CD4-positive, alpha-beta T cell (primary cell): ENCODE measurements at regions of chr1 and their contacts with region 1.

Region 1: GRCh38 chr1:221741711-221742554 is at the start of gene DUSP10:
- DNase-seq: peak; percentile 97 to 100 (median 98)
- ATAC-seq: peak; percentile 85
- H3K4me3 ChIP-seq: peak within 1 kb of the TSS; percentile 75
- H3K4me3 Mint-ChIP-seq: peak within 1 kb of the TSS; percentile 75
- H3K27ac ChIP-seq: peak within 1 kb of the TSS; percentile 98 to 99
- H3K27ac Mint-ChIP-seq: no peak within 1 kb of the TSS
- H3K4me1 ChIP-seq: peaks cover 41% of the 10 kb centered on the region
- H3K4me1 Mint-ChIP-seq: peaks cover 26% of the 10 kb centered on the region
- H3K27me3 ChIP-seq: no peaks in the 10 kb centered on the region
- H3K27me3 Mint-ChIP-seq: no peaks in the 10 kb centered on the region
- CTCF ChIP-seq: no peak
- total RNA-seq, gene DUSP10: 66.9 to 70.9 TPM

Region 2: DNA sequence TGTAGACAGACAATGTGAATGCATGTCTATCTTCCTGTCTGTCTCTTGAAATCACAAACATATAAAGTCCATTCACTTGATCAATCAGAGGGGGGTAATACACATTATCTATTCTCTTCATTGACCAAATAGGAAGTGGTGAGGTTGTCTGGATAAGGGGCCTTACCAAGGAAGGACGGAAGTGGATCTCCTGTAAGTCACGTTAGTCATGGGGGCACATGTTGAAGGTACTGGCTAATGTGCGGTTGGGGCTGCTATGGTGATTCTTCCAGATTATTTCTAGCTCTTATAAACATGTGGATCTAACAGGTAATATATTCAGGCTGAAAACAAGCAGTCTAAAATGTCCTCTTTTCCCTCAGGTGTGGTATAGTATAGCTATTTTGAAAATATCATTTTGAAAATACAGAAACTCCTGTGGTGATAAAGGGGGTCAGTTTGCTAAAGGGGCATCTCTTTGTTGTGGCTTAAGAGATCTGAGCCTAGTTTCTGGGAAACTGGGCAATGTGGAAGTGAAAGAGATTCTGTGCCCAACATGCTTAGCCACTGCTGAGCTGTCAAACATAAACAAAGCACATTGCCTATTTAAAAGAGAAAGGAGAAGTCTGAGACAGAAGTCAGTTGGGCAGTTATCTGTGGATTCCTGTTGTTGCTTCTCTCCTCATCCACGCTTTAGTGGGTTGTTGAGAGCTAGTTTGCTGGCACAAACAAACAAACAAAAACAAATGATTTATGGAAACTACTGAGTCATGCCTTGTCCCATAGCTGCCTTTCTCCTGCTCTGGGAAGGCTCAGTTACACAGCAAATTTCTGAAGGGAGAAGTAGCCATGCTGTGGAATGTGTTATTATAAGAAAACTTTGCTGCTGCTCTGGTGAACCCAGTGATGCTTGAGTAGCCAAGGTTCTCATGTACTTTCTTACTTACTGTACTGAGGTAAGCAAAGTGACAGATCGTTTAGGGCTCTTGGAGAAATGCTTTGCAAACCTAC is 695.8 kb before region 1 on chr1:
- CTCF ChIA-PET with region 1: no interaction called
- POLR2A ChIA-PET with region 1: no interaction called
- intact Hi-C with region 1: no loop called
- DNase-seq: peak in 3 of 14 experiments; percentile 18 to 31 (median 27)
- ATAC-seq: no peak
- H3K4me3 ChIP-seq: no peak overlapping the region
- H3K4me3 Mint-ChIP-seq: no peak overlapping the region
- H3K27ac ChIP-seq: no peak overlapping the region
- H3K27ac Mint-ChIP-seq: no peak overlapping the region
- H3K4me1 ChIP-seq: no peaks in the 10 kb centered on the region
- H3K4me1 Mint-ChIP-seq: no peaks in the 10 kb centered on the region
- H3K27me3 ChIP-seq: peaks cover 0 to 8% of the 10 kb centered on the region in 2 experiments
- H3K27me3 Mint-ChIP-seq: peaks cover 9% of the 10 kb centered on the region
- CTCF ChIP-seq: no peak

Region 3: DNA sequence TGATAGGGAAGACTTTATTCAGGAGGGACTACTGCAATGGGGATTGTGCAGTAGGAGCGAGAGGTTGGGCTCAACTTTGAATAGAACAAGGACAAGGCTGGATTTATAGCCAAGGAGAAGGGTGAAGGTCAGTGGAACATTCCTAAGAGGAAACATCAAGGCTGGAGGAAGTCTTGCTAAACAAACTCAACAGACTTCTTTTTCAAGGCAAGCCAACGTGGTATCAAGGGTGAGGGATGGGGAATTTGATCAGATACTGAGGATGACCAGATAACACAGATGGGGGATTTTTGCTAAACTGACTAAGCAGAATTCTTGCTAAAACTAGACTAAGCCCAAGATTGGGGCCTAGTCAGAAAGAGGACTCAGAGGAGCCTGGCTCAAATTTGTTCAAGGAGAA is 107.3 kb before region 1 on chr1:
- CTCF ChIA-PET with region 1: interaction called, 3 read pairs
- POLR2A ChIA-PET with region 1: interaction called, 8 read pairs
- intact Hi-C with region 1: loop called in 1 of 2 experiments (anchors 5 kb)
- DNase-seq: no peak
- ATAC-seq: no peak
- H3K4me3 ChIP-seq: no peak overlapping the region
- H3K4me3 Mint-ChIP-seq: no peak overlapping the region
- H3K27ac ChIP-seq: no peak overlapping the region
- H3K27ac Mint-ChIP-seq: no peak overlapping the region
- H3K4me1 ChIP-seq: no peaks in the 10 kb centered on the region
- H3K4me1 Mint-ChIP-seq: no peaks in the 10 kb centered on the region
- H3K27me3 ChIP-seq: no peaks in the 10 kb centered on the region
- H3K27me3 Mint-ChIP-seq: no peaks in the 10 kb centered on the region
- CTCF ChIP-seq: no peak

Region 4: GRCh38 chr1:221693087-221693486 is 48.8 kb before region 1 on chr1:
- CTCF ChIA-PET with region 1: interaction called, 5 read pairs
- POLR2A ChIA-PET with region 1: interaction called, 13 read pairs
- intact Hi-C with region 1: loop called in 1 of 2 experiments (anchors 5 kb)
- DNase-seq: no peak
- ATAC-seq: peak; percentile 48
- H3K4me3 ChIP-seq: no peak overlapping the region
- H3K4me3 Mint-ChIP-seq: no peak overlapping the region
- H3K27ac ChIP-seq: no peak overlapping the region
- H3K27ac Mint-ChIP-seq: no peak overlapping the region
- H3K4me1 ChIP-seq: peaks cover 3% of the 10 kb centered on the region
- H3K4me1 Mint-ChIP-seq: peaks cover 3% of the 10 kb centered on the region
- H3K27me3 ChIP-seq: no peaks in the 10 kb centered on the region
- H3K27me3 Mint-ChIP-seq: no peaks in the 10 kb centered on the region
- CTCF ChIP-seq: no peak

Region 5: DNA sequence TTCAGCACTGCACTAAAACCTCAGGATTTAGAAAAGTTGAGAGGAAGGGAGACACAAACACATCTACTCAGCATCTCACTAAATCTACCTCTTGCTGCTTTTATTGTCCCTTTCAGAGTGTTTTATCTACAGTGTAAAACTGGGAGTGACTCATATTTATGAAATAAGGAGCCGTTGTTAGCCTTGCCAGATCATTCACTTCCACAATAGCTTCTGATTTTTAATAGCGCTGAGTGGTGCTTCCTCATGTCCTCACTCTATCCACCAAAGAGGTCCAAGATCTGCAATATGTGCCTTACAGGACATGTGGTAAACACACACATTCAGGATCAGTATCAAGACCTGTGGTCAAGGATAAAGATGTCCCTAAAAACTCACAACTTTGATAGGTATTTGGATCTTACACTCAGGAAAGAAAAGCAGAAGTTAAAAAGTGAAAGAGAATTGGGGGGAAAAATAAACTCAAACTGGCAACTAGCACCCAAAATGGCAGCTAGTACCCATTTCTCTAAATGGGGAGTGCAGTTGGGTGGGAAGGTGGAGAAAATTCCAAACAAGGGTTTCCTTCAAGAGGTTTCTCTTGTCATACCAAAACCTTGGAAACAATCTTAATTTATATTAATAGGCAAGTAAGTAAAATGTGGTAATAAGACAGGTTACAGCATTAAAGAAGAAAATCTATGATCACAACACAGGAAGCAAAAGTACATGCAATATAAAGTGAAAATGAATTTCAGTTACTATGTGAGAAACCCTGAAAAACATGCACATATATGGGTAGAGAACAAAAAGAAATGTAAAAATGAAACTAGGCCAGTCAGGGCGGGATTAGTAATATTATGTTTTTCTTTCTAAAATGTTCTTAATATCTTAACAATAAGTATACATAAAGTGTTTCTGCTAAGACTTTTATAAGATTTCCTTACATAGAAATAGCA is 15.9 kb before region 1 on chr1:
- CTCF ChIA-PET with region 1: interaction called, 6 read pairs
- POLR2A ChIA-PET with region 1: interaction called, 103 read pairs
- intact Hi-C with region 1: loop called in 1 of 2 experiments (anchors 2 kb)
- DNase-seq: peak in 2 of 14 experiments; percentile 37 to 70
- ATAC-seq: peak; percentile 85
- H3K4me3 ChIP-seq: peak overlapping the region; percentile 6
- H3K4me3 Mint-ChIP-seq: peak overlapping the region; percentile 43
- H3K27ac ChIP-seq: no peak overlapping the region
- H3K27ac Mint-ChIP-seq: peak overlapping the region; percentile 13
- H3K4me1 ChIP-seq: peaks cover 20% of the 10 kb centered on the region
- H3K4me1 Mint-ChIP-seq: peaks cover 71% of the 10 kb centered on the region
- H3K27me3 ChIP-seq: no peaks in the 10 kb centered on the region
- H3K27me3 Mint-ChIP-seq: no peaks in the 10 kb centered on the region
- CTCF ChIP-seq: no peak

Region 6: GRCh38 chr1:221783936-221784335 is 42.0 kb after region 1 on chr1:
- CTCF ChIA-PET with region 1: no interaction called
- POLR2A ChIA-PET with region 1: interaction called, 72 read pairs
- intact Hi-C with region 1: no loop called
- DNase-seq: peak in 4 of 14 experiments; percentile 22 to 76 (median 47)
- ATAC-seq: peak; percentile 88
- H3K4me3 ChIP-seq: peak overlapping the region; percentile 6
- H3K4me3 Mint-ChIP-seq: peak overlapping the region; percentile 44
- H3K27ac ChIP-seq: no peak overlapping the region
- H3K27ac Mint-ChIP-seq: no peak overlapping the region
- H3K4me1 ChIP-seq: peaks cover 51% of the 10 kb centered on the region
- H3K4me1 Mint-ChIP-seq: peaks cover 52% of the 10 kb centered on the region
- H3K27me3 ChIP-seq: no peaks in the 10 kb centered on the region
- H3K27me3 Mint-ChIP-seq: no peaks in the 10 kb centered on the region
- CTCF ChIP-seq: no peak

Region 7: GRCh38 chr1:222617367-222617951 is 875.5 kb after region 1 on chr1:
- CTCF ChIA-PET with region 1: no interaction called
- POLR2A ChIA-PET with region 1: no interaction called
- intact Hi-C with region 1: loop called in 1 of 2 experiments (anchors 10 kb)
- DNase-seq: peak; percentile 85 to 99 (median 90)
- ATAC-seq: peak; percentile 90
- H3K4me3 ChIP-seq: peak overlapping the region; percentile 69
- H3K4me3 Mint-ChIP-seq: peak overlapping the region; percentile 94
- H3K27ac ChIP-seq: peak overlapping the region; percentile 43 to 80
- H3K27ac Mint-ChIP-seq: peak overlapping the region; percentile 92
- H3K4me1 ChIP-seq: peaks cover 18% of the 10 kb centered on the region
- H3K4me1 Mint-ChIP-seq: peaks cover 40% of the 10 kb centered on the region
- H3K27me3 ChIP-seq: peaks cover 0 to 6% of the 10 kb centered on the region in 2 experiments
- H3K27me3 Mint-ChIP-seq: peaks cover 34% of the 10 kb centered on the region
- CTCF ChIP-seq: no peak